Calu3 (cell line): ENCODE measurements at regions of chr20 and their contacts with region 1.

Region 1: DNA sequence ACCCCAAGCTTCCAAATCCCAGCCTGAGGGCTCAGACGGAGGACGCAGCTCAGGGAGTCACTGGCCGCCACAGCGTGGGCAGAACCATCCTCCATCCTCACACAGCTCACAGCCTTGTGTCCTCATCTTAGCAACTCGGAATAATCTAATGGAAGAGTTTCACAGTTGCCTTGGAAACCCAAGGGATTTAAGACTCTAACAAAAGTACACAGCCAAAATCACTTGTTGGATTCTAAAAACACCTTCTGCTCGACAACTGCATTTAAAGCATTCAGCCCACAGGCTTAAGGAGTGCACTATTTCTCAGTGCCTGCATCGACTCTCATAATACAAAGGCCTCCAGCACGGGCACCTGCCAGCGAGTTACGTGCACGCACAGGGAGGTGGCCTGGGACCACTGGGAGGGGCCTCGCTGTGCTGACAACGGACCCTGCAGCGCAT is 45.4 kb downstream of the ZBTB46 start:
- DNase-seq: no peak
- H3K4me3 Mint-ChIP-seq: no peak overlapping the region
- H3K27ac Mint-ChIP-seq: no peak overlapping the region
- H3K4me1 Mint-ChIP-seq: no peaks in the 10 kb centered on the region
- H3K27me3 Mint-ChIP-seq: peaks cover 15% of the 10 kb centered on the region
- CTCF ChIP-seq: no peak

Region 2: DNA sequence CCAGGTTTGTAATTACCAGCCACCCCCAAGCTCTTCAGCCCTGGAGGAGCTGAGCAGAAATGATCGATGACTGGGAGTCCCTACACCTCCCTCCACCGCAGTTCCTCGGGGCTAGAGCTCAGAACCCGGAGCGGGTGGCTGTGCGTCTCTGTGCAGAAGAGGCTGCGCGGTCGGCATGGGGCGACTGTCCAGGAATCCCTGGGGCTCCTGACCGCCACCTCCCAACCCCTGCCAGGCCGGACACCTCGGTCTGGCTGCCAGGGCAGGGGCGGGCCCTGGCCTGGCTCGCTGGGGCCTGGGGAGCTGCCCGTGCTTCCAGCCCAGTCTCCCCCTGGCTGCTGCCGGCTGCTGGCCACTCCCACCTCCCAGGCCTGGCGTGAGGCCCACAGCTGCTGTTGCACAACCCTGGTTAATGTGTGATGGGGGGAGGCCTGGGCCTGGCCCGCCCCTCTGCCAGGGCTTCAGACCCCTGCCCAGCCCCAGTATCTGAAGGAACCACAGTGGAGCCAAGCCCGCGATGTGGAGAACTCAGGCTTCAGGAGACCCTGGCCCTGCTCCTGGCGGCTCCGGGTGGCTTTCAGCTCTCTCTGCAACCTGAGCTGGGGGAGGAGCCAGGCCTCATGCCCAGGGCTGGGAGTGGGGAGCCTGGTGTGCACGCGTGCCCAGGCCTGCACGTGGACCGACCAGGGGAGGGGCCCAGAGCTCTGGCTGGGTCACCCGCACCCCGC is 44.9 kb before region 1 on chr20:
- CTCF ChIA-PET with region 1: interaction called, 12 read pairs
- intact Hi-C with region 1: no loop called
- DNase-seq: peak; percentile 98
- H3K4me3 Mint-ChIP-seq: peak overlapping the region; percentile 72
- H3K27ac Mint-ChIP-seq: peak overlapping the region; percentile 64
- H3K4me1 Mint-ChIP-seq: no peaks in the 10 kb centered on the region
- H3K27me3 Mint-ChIP-seq: no peaks in the 10 kb centered on the region
- CTCF ChIP-seq: peak; percentile 38

Region 3: DNA sequence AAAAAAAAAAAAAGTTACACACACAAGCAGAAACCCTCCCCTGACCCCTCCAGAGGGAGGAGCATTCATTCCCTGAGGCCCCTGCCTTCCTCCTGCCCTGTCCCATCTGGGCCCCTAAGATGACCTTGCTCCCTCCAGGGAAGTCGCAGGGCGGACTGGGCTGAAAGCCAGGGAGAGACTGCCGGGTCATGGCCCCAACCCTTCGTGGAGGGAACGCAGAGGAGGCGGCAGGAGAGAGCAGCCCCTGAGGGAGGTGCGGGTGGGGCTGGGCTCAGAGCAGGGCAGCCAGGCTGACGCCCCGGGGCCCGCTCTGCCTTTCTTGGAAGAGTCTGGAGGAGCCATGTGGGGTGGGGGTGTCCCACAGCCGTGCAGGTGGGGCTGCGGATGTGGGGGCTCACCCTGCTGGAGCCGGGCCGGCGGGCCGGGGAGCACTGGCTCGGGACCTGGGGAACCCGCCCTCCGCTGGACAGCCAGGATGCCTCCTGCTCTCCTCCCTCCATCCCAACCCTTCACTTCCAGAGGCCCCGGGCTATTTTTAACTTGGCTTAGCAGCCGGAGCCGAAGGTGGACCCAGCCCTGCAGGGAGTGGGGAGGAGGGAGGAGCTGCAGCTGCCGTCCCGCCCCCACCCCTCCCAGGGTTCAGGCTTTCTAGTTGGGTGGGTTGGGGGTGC is 60.6 kb after region 1 on chr20:
- CTCF ChIA-PET with region 1: no interaction called
- intact Hi-C with region 1: no loop called
- DNase-seq: no peak
- H3K4me3 Mint-ChIP-seq: no peak overlapping the region
- H3K27ac Mint-ChIP-seq: no peak overlapping the region
- H3K4me1 Mint-ChIP-seq: no peaks in the 10 kb centered on the region
- H3K27me3 Mint-ChIP-seq: peaks cover 44% of the 10 kb centered on the region
- CTCF ChIP-seq: no peak